HepG2 (cell line): ENCODE measurements at regions of chr17 and their contacts with region 1.

Region 1: GRCh38 chr17:38674749-38675615 is at the start of gene EPOP:
- DNase-seq: peak; percentile 86
- ATAC-seq: peak; percentile 82
- H3K4me3 ChIP-seq: peak within 1 kb of the TSS; percentile 75 to 94 (median 89)
- H3K27ac ChIP-seq: peak within 1 kb of the TSS; percentile 60
- H3K4me1 ChIP-seq: peaks cover 77% of the 10 kb centered on the region
- H3K27me3 ChIP-seq: peaks cover 2 to 6% of the 10 kb centered on the region in 2 experiments; a peak in 4 of 5 replicates
- CTCF ChIP-seq: 0 out of 2 replicates have a peak, but pooled peaks have one; percentile 8
- EP300 ChIP-seq: 0 out of 4 replicates have a peak, but pooled peaks of 1 of the 2 experiments have one; percentile 5
- POLR2A ChIP-seq: peak; percentile 69 to 88
- RAD21 ChIP-seq: 0 out of 2 replicates have a peak, but pooled peaks have one; percentile 5
- total RNA-seq, gene EPOP: 29.0 and 37.8 TPM in 2 replicates

Region 2: GRCh38 chr17:38660097-38661025 is 14.6 kb before region 1 on chr17:
- CTCF ChIA-PET with region 1: no interaction called
- POLR2A ChIA-PET with region 1: interaction called, 13 read pairs
- in situ Hi-C with region 1: no loop called
- intact Hi-C with region 1: no loop called
- DNase-seq: no peak
- ATAC-seq: no peak
- H3K4me3 ChIP-seq: no peak overlapping the region
- H3K27ac ChIP-seq: peak overlapping the region; percentile 75
- H3K4me1 ChIP-seq: peaks cover 85% of the 10 kb centered on the region
- H3K27me3 ChIP-seq: no peaks in the 10 kb centered on the region
- CTCF ChIP-seq: no peak
- EP300 ChIP-seq: no peak
- POLR2A ChIP-seq: no peak
- RAD21 ChIP-seq: 0 out of 2 replicates have a peak, but pooled peaks have one; percentile 19

Region 3: DNA sequence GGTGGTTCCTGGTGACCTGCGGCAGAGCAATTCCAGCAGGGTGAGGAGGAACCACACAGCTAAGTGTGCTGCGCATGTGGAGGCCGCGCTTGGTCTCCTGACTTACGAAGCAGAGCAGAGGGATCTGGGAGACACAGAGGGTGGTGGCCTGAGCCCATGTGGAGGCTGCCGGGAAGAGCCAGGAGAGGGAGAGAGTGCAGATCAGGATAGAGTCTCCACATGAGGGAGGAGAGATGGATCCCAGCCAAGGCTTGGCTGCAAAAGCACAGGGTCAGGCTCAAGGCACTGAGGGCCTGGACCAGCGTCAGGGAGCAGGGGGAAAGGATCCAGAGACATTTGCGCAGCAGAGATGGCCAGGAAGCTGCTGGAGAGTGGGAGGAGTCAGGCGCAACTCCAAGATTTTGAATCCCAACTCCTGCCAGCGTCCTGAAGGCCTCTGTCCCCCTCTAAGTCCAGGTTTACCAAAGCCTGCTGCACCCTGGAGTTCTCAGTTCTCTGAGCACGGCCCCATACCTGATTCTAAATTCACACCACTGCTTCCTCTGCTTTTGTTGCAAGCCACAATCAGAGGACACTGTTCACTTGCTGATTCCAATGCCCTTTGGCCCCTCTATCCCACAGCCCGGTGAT is 18.8 kb after region 1 on chr17:
- CTCF ChIA-PET with region 1: no interaction called
- POLR2A ChIA-PET with region 1: interaction called, 9 read pairs
- in situ Hi-C with region 1: no loop called
- intact Hi-C with region 1: loop called (anchors 2 kb)
- DNase-seq: peak; percentile 48
- ATAC-seq: peak; percentile 73
- H3K4me3 ChIP-seq: peak overlapping the region; percentile 2 to 55 (median 31); a peak in 5 of 6 replicates
- H3K27ac ChIP-seq: no peak overlapping the region
- H3K4me1 ChIP-seq: peaks cover 76% of the 10 kb centered on the region
- H3K27me3 ChIP-seq: no peaks in the 10 kb centered on the region; a peak in 2 of 5 replicates
- CTCF ChIP-seq: peak; percentile 25; the same call in 1 of the 2 replicates
- EP300 ChIP-seq: 0 out of 4 replicates have a peak, but pooled peaks of 1 of the 2 experiments have one; percentile 10
- POLR2A ChIP-seq: peak in 1 of 2 experiments; percentile 39; a peak in 1 of 4 replicates
- RAD21 ChIP-seq: no peak

Region 4: GRCh38 chr17:38711792-38712571 is 37.0 kb after region 1 on chr17:
- CTCF ChIA-PET with region 1: no interaction called
- POLR2A ChIA-PET with region 1: interaction called, 88 read pairs
- in situ Hi-C with region 1: no loop called
- intact Hi-C with region 1: no loop called
- DNase-seq: no peak
- ATAC-seq: no peak
- H3K4me3 ChIP-seq: no peak overlapping the region
- H3K27ac ChIP-seq: no peak overlapping the region
- H3K4me1 ChIP-seq: peaks cover 40% of the 10 kb centered on the region
- H3K27me3 ChIP-seq: no peaks in the 10 kb centered on the region
- CTCF ChIP-seq: no peak
- EP300 ChIP-seq: no peak
- POLR2A ChIP-seq: no peak; a peak in 1 of 4 replicates
- RAD21 ChIP-seq: no peak

Region 5: GRCh38 chr17:38735161-38735997 is 60.4 kb after region 1 on chr17:
- CTCF ChIA-PET with region 1: interaction called, 37 read pairs
- POLR2A ChIA-PET with region 1: interaction called, 19 read pairs
- in situ Hi-C with region 1: loop called (anchors 5 kb)
- intact Hi-C with region 1: loop called (anchors 1 kb)
- DNase-seq: peak; percentile 33
- ATAC-seq: no peak
- H3K4me3 ChIP-seq: no peak overlapping the region; a peak in 1 of 6 replicates
- H3K27ac ChIP-seq: peak overlapping the region; percentile 7
- H3K4me1 ChIP-seq: peaks cover 45% of the 10 kb centered on the region
- H3K27me3 ChIP-seq: no peaks in the 10 kb centered on the region
- CTCF ChIP-seq: peak; percentile 99
- EP300 ChIP-seq: no peak; a peak in 1 of 4 replicates
- POLR2A ChIP-seq: peak in 1 of 2 experiments; percentile 66; a peak in 3 of 4 replicates
- RAD21 ChIP-seq: peak; percentile 90